Posterior vena cava (tissue), 2 donors: ENCODE measurements at regions of chr5 and their contacts with region 1.

Region 1: DNA sequence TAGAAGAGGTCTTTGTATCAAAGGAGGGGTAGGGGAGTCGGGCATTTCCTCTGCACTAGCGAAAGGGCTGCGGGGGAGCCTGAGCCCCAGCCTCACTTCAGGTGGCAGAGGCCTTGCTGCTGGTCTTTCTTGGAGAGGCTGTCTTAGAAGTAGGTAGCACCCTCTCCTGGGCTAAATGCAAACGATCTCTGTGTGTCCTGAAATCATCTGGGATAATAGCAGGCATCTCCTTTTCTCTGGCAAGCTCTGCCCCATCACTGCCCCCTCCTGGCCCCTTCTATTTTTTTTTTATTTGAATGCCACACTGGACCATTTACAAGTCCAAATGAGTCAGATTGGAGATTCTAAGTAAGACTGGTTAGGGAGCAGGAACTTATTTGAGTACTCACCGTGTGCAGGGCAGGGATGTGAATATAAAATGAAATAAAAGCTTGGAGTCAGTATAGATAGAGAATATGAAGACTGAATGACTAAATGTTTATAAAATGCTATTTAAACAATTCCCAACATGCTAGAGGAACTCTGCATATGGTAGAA is 137.1 kb downstream of the FGF1 start:
- DNase-seq: no peak

Region 2: GRCh38 chr5:142156839-142157463 is 391.9 kb before region 1 on chr5:
- intact Hi-C with region 1: loop called (anchors 5 to 10 kb)
- DNase-seq: no peak

Region 3: GRCh38 chr5:142568283-142568995 is 19.6 kb after region 1 on chr5:
- intact Hi-C with region 1: no loop called
- DNase-seq: peak; percentile 85

Region 4: GRCh38 chr5:144076521-144077083 is 1527.8 kb after region 1 on chr5:
- intact Hi-C with region 1: no loop called
- DNase-seq: no peak